ENCODE measurements at regions of chr9 and their contacts with region 1.

Region 1: DNA sequence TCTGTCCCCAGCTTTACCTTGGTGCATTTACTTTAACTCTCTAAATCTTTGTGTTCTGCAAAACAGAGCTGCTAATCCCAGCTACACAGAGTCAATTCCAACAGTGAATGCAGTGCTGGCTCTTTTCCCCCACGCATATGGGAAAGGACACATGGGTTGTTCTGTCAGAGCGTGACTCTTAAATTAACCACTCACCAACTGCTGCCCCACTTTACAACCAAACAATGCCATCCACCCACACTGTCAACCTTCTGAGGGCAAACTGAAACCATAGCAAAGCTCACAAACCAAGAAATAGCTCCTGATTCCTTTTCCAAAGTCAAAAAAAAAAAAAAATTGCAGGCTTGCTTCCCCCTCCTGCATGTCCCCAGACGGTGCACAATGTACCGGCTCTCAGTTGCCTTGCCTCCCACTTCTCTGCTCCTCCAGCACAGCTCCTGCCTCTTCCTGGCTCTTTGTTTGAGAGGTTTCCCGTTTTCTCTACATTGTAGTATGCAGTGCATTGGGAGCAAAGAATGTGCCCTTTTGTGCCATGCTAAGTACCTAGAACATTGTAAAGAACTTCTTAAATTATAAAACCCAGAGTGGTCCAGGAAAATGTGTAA is 151.5 kb upstream of the DAPK1 start:
- DNase-seq: no peak
- H3K4me3 ChIP-seq: no peak overlapping the region
- H3K27ac ChIP-seq: no peak overlapping the region
- H3K4me1 ChIP-seq: peaks cover 0 to 4% (median 2%) of the 10 kb centered on the region in 4 donors
- H3K27me3 ChIP-seq: no peaks in the 10 kb centered on the region
- CTCF ChIP-seq: no peak
- EP300 ChIP-seq: no peak
- POLR2A ChIP-seq: no peak

Region 2: GRCh38 chr9:87491523-87491922 is 145.4 kb after region 1 on chr9:
- intact Hi-C with region 1: loop called (anchors 5 kb)
- DNase-seq: no peak
- H3K4me3 ChIP-seq: no peak overlapping the region
- H3K27ac ChIP-seq: no peak overlapping the region
- H3K4me1 ChIP-seq: no peaks in the 10 kb centered on the region
- H3K27me3 ChIP-seq: no peaks in the 10 kb centered on the region
- CTCF ChIP-seq: no peak
- EP300 ChIP-seq: no peak
- POLR2A ChIP-seq: no peak